ENCODE measurements at regions of chr5 and their contacts with region 1.

Region 1: DNA sequence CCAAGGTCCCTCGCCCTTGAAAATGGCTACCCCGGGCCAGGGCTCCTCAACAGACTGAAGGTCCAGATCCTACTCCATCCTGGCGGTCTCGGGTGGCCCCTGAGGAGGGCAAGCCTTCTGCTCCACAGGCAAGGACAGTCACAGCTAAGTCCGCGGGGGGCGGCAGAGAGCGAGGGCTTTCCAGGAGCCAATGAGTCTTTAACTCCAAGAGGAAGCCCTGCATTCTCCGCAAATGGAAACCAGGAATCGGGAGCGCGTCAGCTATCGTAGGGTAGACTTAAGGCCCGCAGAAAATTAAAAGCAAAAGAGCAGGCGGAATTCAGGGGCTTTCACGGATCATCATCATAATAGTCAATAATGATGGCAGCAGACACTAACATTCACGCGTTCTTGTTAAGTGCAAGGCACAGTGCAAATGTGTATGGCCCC is 87.8 kb upstream of the TNFAIP8 start:
- DNase-seq: peak; percentile 76 to 79
- H3K4me3 ChIP-seq: peak overlapping the region; percentile 95
- H3K27ac ChIP-seq: no peak overlapping the region
- H3K4me1 ChIP-seq: peaks cover 18% of the 10 kb centered on the region
- H3K27me3 ChIP-seq: no peaks in the 10 kb centered on the region
- CTCF ChIP-seq: no peak; the same call in 1 of the 2 replicates

Region 2: DNA sequence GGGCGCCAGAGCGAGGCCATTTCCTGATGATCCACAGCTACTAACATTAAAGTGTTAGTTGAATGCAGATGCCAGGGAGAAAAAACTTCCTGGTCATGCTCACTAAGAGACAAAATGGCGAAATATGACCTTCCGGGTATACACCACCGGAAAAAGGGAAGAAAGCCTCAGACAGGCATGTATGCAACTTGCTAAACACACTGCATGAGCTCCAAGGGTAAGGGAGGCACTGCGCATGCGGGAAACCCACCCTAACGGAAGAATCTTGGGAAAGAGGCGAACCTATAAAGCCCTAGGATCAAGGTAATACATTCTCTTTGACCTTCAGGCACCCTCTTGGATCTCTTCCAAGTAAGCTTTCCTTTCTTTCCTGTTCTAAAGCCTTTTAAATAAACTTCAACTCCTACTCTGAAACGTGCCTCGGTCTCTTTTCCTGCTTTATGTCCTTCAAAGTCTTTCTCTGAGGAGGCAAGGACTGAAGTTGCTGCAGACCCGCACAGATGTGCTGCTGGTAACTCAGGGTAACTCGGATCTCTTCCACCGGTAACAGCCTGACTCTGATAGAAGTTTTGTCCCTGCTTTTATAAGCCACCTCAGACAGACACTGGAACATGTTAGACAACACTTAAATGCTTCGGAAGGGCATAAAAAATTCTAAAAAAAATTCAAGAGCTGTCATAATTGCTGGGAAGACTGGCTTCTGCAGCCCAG is 344.5 kb before region 1 on chr5:
- CTCF ChIA-PET with region 1: no interaction called
- POLR2A ChIA-PET with region 1: no interaction called
- intact Hi-C with region 1: no loop called
- DNase-seq: no peak
- H3K4me3 ChIP-seq: no peak overlapping the region
- H3K27ac ChIP-seq: no peak overlapping the region
- H3K4me1 ChIP-seq: no peaks in the 10 kb centered on the region
- H3K27me3 ChIP-seq: no peaks in the 10 kb centered on the region
- CTCF ChIP-seq: no peak

Region 3: GRCh38 chr5:119070828-119071572 is 197.0 kb before region 1 on chr5 and contains the start of gene DMXL1:
- CTCF ChIA-PET with region 1: no interaction called
- POLR2A ChIA-PET with region 1: interaction called, 6 read pairs
- intact Hi-C with region 1: loop called (anchors 2 kb)
- DNase-seq: peak; percentile 97 to 98
- H3K4me3 ChIP-seq: peak within 1 kb of the TSS; percentile 95
- H3K27ac ChIP-seq: peak within 1 kb of the TSS; percentile 80
- H3K4me1 ChIP-seq: peaks cover 16% of the 10 kb centered on the region
- H3K27me3 ChIP-seq: no peaks in the 10 kb centered on the region
- CTCF ChIP-seq: no peak
- total RNA-seq, gene DMXL1: 19.7 and 27.3 TPM in 2 replicates

Region 4: GRCh38 chr5:119095611-119096010 is 172.4 kb before region 1 on chr5:
- CTCF ChIA-PET with region 1: no interaction called
- POLR2A ChIA-PET with region 1: interaction called, 15 read pairs
- intact Hi-C with region 1: no loop called
- DNase-seq: no peak
- H3K4me3 ChIP-seq: no peak overlapping the region
- H3K27ac ChIP-seq: no peak overlapping the region
- H3K4me1 ChIP-seq: no peaks in the 10 kb centered on the region
- H3K27me3 ChIP-seq: no peaks in the 10 kb centered on the region
- CTCF ChIP-seq: no peak

Region 5: DNA sequence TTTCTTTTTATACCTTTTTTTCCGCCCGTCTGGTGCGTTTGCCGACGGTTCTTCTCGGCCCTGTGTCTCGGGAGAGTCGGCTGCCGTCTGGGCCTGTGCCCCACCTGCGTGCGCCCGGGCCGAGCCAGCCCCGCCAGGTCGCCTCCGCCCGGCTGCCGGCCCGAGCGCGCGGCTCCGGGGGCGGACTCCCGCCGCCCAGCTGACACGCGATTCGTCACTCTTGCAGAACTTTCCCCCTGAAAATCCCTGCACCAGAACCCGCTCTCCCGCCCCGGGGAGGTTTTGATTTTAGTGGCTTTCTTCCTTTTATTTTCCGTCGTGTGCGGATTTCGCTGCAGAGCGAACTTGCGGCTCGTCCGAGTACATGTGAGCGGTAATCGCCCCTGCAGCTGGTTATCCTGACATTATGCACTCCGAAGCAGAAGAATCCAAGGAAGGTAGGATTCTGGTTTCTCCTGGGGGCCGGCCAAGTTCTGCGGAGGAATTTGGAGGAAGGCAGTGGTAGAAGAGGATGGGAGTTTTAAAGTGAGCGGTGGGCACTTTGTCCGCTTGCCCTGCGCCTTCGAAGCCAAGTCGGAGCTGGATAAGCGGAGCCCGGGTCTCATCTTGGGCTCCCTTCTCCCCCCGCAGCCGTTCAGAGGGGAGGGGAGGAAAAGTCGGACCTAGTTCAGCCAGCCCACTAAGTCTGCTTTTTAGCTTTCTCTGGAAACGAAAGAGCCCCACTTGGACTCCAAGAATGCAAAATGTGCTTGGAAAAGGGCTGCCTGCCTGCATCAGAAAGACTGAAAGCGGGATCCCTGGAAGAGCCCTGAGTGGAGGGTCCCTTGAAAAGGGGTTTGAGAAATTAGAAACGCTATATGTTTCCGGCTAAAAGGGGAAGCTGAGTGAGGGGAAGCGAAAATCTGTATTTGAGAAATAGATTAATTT is 88.0 kb after region 1 on chr5 and contains the start of gene TNFAIP8:
- CTCF ChIA-PET with region 1: no interaction called
- POLR2A ChIA-PET with region 1: no interaction called
- intact Hi-C with region 1: loop called (anchors 1 kb)
- DNase-seq: peak; percentile 56 to 58
- H3K4me3 ChIP-seq: peak within 1 kb of the TSS; percentile 96
- H3K27ac ChIP-seq: peak within 1 kb of the TSS; percentile 78
- H3K4me1 ChIP-seq: peaks cover 67% of the 10 kb centered on the region
- H3K27me3 ChIP-seq: no peaks in the 10 kb centered on the region
- CTCF ChIP-seq: no peak
- total RNA-seq, gene TNFAIP8: 15.0 and 16.4 TPM in 2 replicates